Activated CD4-positive, alpha-beta T cell treated with anti-CD3 and anti-CD28 coated beads for 36 hours (primary cell): ENCODE measurements at regions of chr15 and their contacts with region 1.

Region 1: GRCh38 chr15:31442203-31443111 is 115.8 kb downstream of the KLF13 start:
- DNase-seq: peak; percentile 38
- ATAC-seq: no peak
- H3K4me3 Mint-ChIP-seq: peak overlapping the region; percentile 8
- H3K27ac Mint-ChIP-seq: peak overlapping the region; percentile 4
- H3K4me1 Mint-ChIP-seq: peaks cover 58% of the 10 kb centered on the region
- H3K27me3 Mint-ChIP-seq: peaks cover 2% of the 10 kb centered on the region

Region 2: GRCh38 chr15:31128919-31129768 is 313.3 kb before region 1 on chr15:
- CTCF ChIA-PET with region 1: no interaction called
- POLR2A ChIA-PET with region 1: no interaction called
- intact Hi-C with region 1: no loop called
- DNase-seq: peak; percentile 88
- ATAC-seq: peak; percentile 93
- H3K4me3 Mint-ChIP-seq: no peak overlapping the region
- H3K27ac Mint-ChIP-seq: no peak overlapping the region
- H3K4me1 Mint-ChIP-seq: peaks cover 3% of the 10 kb centered on the region
- H3K27me3 Mint-ChIP-seq: no peaks in the 10 kb centered on the region

Region 3: DNA sequence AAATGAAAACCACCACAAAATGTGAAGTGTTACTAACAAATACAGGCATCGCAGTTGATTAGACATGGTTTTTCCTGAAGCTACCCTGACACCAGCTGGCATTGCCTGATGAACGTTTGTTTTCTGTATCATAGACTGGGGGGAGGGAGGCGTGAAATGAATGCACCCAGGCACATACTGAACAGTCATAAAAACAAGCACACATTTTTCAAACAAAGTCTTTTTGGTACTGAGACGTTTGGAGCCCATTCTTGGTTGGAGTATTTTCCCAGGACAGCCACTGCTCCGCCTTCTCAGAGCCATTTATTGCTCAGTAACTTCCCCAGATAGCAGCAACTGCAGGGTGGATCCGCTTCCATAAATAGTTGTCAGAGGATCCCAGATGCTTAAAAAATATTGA is 63.4 kb before region 1 on chr15:
- CTCF ChIA-PET with region 1: no interaction called
- POLR2A ChIA-PET with region 1: no interaction called
- intact Hi-C with region 1: no loop called
- DNase-seq: peak; percentile 58
- ATAC-seq: peak; percentile 74
- H3K4me3 Mint-ChIP-seq: no peak overlapping the region
- H3K27ac Mint-ChIP-seq: peak overlapping the region; percentile 80
- H3K4me1 Mint-ChIP-seq: peaks cover 49% of the 10 kb centered on the region
- H3K27me3 Mint-ChIP-seq: no peaks in the 10 kb centered on the region

Region 4: GRCh38 chr15:31472636-31473384 is 30.4 kb after region 1 on chr15:
- CTCF ChIA-PET with region 1: interaction called, 11 read pairs
- POLR2A ChIA-PET with region 1: interaction called, 4 read pairs
- intact Hi-C with region 1: no loop called
- DNase-seq: peak; percentile 74
- ATAC-seq: peak; percentile 93
- H3K4me3 Mint-ChIP-seq: peak overlapping the region; percentile 70
- H3K27ac Mint-ChIP-seq: peak overlapping the region; percentile 95
- H3K4me1 Mint-ChIP-seq: peaks cover 41% of the 10 kb centered on the region
- H3K27me3 Mint-ChIP-seq: no peaks in the 10 kb centered on the region